ENCODE measurements at regions of chr4 and their contacts with region 1.

Region 1: GRCh38 chr4:24980064-24980690 is 50.6 kb downstream of the LGI2 start:
- DNase-seq: peak in 8 of 9 donors; percentile 18 to 61 (median 48)
- ATAC-seq: peak; percentile 75
- H3K4me3 ChIP-seq: no peak overlapping the region
- H3K4me3 Mint-ChIP-seq: peak overlapping the region in 9 of 10 donors; percentile 58 to 80 (median 65)
- H3K27ac ChIP-seq: no peak overlapping the region
- H3K27ac Mint-ChIP-seq: peak overlapping the region in 1 of 9 donors; percentile 12
- H3K4me1 ChIP-seq: peaks cover 0 to 3% of the 10 kb centered on the region in 2 donors
- H3K4me1 Mint-ChIP-seq: peaks cover 0 to 15% (median 12%) of the 10 kb centered on the region in 7 donors
- H3K27me3 ChIP-seq: no peaks in the 10 kb centered on the region
- H3K27me3 Mint-ChIP-seq: peaks cover 19 to 37% (median 33%) of the 10 kb centered on the region in 5 donors

Region 2: GRCh38 chr4:24668956-24669355 is 311.2 kb before region 1 on chr4:
- CTCF ChIA-PET with region 1: no interaction called
- POLR2A ChIA-PET with region 1: no interaction called
- intact Hi-C with region 1: no loop called
- DNase-seq: no peak
- ATAC-seq: no peak
- H3K4me3 ChIP-seq: no peak overlapping the region
- H3K4me3 Mint-ChIP-seq: no peak overlapping the region
- H3K27ac ChIP-seq: no peak overlapping the region
- H3K27ac Mint-ChIP-seq: no peak overlapping the region
- H3K4me1 ChIP-seq: no peaks in the 10 kb centered on the region
- H3K4me1 Mint-ChIP-seq: no peaks in the 10 kb centered on the region
- H3K27me3 ChIP-seq: no peaks in the 10 kb centered on the region
- H3K27me3 Mint-ChIP-seq: peaks cover 0 to 54% (median 25%) of the 10 kb centered on the region in 5 donors

Region 3: GRCh38 chr4:24991015-24991414 is 10.8 kb after region 1 on chr4:
- CTCF ChIA-PET with region 1: interaction called, 12 read pairs
- POLR2A ChIA-PET with region 1: no interaction called
- intact Hi-C with region 1: no loop called
- DNase-seq: no peak
- ATAC-seq: no peak
- H3K4me3 ChIP-seq: no peak overlapping the region
- H3K4me3 Mint-ChIP-seq: no peak overlapping the region
- H3K27ac ChIP-seq: no peak overlapping the region
- H3K27ac Mint-ChIP-seq: no peak overlapping the region
- H3K4me1 ChIP-seq: no peaks in the 10 kb centered on the region
- H3K4me1 Mint-ChIP-seq: peaks cover 0 to 1% (median 0%) of the 10 kb centered on the region in 7 donors
- H3K27me3 ChIP-seq: no peaks in the 10 kb centered on the region
- H3K27me3 Mint-ChIP-seq: peaks cover 0 to 6% (median 3%) of the 10 kb centered on the region in 5 donors

Region 4: GRCh38 chr4:25144870-25145481 is 164.8 kb after region 1 on chr4:
- CTCF ChIA-PET with region 1: interaction called, 11 read pairs
- POLR2A ChIA-PET with region 1: no interaction called
- intact Hi-C with region 1: loop called (anchors 1 kb)
- DNase-seq: peak in 3 of 9 donors; percentile 2 to 8 (median 3)
- ATAC-seq: no peak
- H3K4me3 ChIP-seq: no peak overlapping the region
- H3K4me3 Mint-ChIP-seq: no peak overlapping the region
- H3K27ac ChIP-seq: no peak overlapping the region
- H3K27ac Mint-ChIP-seq: no peak overlapping the region
- H3K4me1 ChIP-seq: no peaks in the 10 kb centered on the region
- H3K4me1 Mint-ChIP-seq: peaks cover 0 to 13% (median 0%) of the 10 kb centered on the region in 7 donors
- H3K27me3 ChIP-seq: no peaks in the 10 kb centered on the region
- H3K27me3 Mint-ChIP-seq: no peaks in the 10 kb centered on the region

Region 5: DNA sequence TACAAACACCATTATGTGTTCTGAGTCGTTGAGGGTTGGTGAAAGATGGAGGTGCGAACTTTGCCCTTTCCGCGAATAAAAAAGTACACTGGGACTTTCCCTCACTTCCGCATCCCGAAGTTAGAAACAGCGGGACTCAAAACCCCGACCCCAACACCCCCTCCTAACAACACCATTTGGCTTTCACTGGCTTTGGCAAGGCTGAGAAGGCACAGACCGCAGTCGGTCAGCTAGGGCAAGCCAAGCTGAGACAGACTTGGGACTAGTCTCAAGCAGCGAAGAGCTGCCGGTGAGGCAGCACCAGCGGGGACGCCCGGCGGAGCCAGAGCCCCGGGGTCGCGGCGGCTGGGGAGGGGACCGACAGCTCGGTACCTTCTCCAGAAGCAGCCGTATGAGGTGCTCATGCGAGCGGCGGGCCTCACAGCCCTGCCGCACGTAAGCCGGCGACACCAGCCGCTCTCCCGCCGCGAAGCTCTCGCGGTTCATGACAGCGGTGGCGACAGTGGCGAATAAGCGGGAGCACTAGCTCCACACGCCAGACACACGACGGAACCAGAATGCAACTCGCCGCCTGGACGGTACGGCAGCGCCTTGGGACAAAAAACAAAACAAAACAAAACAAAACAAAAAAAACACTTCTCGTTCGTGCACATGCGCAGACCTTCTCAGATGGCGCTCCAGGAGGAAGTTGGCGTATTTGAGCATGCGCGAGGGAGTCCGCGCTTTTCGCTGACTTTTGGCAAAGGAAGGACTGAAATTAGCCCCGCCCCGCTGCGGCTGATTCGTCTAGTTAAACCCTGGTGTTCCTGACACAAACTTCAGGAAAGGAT is 179.9 kb after region 1 on chr4 and contains the start of gene SEPSECS:
- CTCF ChIA-PET with region 1: no interaction called
- POLR2A ChIA-PET with region 1: no interaction called
- intact Hi-C with region 1: loop called in 1 of 2 experiments (anchors 1 kb)
- DNase-seq: peak; percentile 82 to 96 (median 94)
- ATAC-seq: peak; percentile 89
- H3K4me3 ChIP-seq: peak within 1 kb of the TSS; percentile 75
- H3K4me3 Mint-ChIP-seq: peak within 1 kb of the TSS; percentile 87 to 97 (median 94)
- H3K27ac ChIP-seq: peak within 1 kb of the TSS; percentile 97
- H3K27ac Mint-ChIP-seq: peak within 1 kb of the TSS; percentile 93 to 98 (median 96)
- H3K4me1 ChIP-seq: peaks cover 4 to 14% of the 10 kb centered on the region in 2 donors
- H3K4me1 Mint-ChIP-seq: peaks cover 33 to 66% (median 52%) of the 10 kb centered on the region in 7 donors
- H3K27me3 ChIP-seq: no peaks in the 10 kb centered on the region
- H3K27me3 Mint-ChIP-seq: peaks cover 0 to 2% (median 0%) of the 10 kb centered on the region in 5 donors
- total RNA-seq, gene SEPSECS: 14.4 to 25.0 (median 17.2) TPM

Region 6: GRCh38 chr4:25367004-25367621 is 386.9 kb after region 1 on chr4:
- CTCF ChIA-PET with region 1: interaction called, 28 read pairs
- POLR2A ChIA-PET with region 1: no interaction called
- intact Hi-C with region 1: loop called in 1 of 2 experiments (anchors 1 kb)
- DNase-seq: peak in 5 of 9 donors; percentile 18 to 37 (median 26)
- ATAC-seq: no peak
- H3K4me3 ChIP-seq: no peak overlapping the region
- H3K4me3 Mint-ChIP-seq: no peak overlapping the region
- H3K27ac ChIP-seq: no peak overlapping the region
- H3K27ac Mint-ChIP-seq: no peak overlapping the region
- H3K4me1 ChIP-seq: no peaks in the 10 kb centered on the region
- H3K4me1 Mint-ChIP-seq: no peaks in the 10 kb centered on the region
- H3K27me3 ChIP-seq: no peaks in the 10 kb centered on the region
- H3K27me3 Mint-ChIP-seq: no peaks in the 10 kb centered on the region

Measured in naive thymus-derived CD4-positive, alpha-beta T cell (primary cell).